ENCODE measurements at regions of chr2 and their contacts with region 1.

Region 1: GRCh38 chr2:2219984-2220383 is 111.1 kb downstream of the MYT1L start:
- DNase-seq: no peak
- H3K4me3 ChIP-seq: no peak overlapping the region
- H3K27ac ChIP-seq: no peak overlapping the region
- H3K4me1 ChIP-seq: no peaks in the 10 kb centered on the region
- H3K27me3 ChIP-seq: no peaks in the 10 kb centered on the region
- CTCF ChIP-seq: no peak
- POLR2A ChIP-seq: no peak

Region 2: GRCh38 chr2:2134042-2134441 is 85.9 kb before region 1 on chr2:
- intact Hi-C with region 1: no loop called
- DNase-seq: no peak
- H3K4me3 ChIP-seq: no peak overlapping the region
- H3K27ac ChIP-seq: no peak overlapping the region
- H3K4me1 ChIP-seq: no peaks in the 10 kb centered on the region
- H3K27me3 ChIP-seq: no peaks in the 10 kb centered on the region
- CTCF ChIP-seq: no peak
- POLR2A ChIP-seq: no peak

Region 3: GRCh38 chr2:2328848-2329247 is 108.9 kb after region 1 on chr2:
- intact Hi-C with region 1: no loop called
- DNase-seq: no peak
- H3K4me3 ChIP-seq: no peak overlapping the region
- H3K27ac ChIP-seq: no peak overlapping the region
- H3K4me1 ChIP-seq: no peaks in the 10 kb centered on the region
- H3K27me3 ChIP-seq: no peaks in the 10 kb centered on the region
- CTCF ChIP-seq: no peak
- POLR2A ChIP-seq: no peak

Region 4: DNA sequence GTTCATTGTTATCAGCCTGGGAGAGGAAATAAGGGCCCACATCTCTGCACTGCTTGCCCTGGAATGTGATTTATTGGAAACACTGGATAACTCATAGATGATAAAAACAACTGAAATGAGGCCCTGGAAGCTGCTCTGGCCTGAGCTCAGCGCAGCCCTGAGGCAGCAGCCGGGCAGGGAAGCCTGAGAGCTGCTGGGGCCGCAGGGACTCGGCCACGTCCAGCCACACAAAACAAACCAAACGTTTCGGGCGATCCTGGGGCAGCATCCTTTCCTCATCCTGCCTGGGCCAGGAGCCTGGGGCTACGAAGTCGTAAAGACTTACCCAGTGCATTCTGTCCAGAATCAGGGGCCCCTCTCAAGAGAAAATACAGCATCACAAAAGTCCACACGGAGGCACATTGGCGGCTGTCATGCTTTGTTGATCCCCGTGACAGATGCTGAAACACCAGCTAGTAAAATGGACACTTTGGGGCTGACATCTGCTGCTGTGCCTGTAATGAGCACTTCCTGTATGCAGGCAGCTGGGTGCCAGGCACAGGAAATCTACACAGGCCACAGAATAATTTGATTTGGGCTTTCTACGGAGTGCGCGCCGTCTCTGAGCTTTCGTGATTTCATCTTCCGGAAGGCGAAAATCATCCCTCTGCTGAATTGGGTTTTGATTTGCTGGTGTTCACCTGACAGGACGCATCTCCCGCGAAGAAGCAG is 907.1 kb after region 1 on chr2:
- intact Hi-C with region 1: loop called (anchors 5 kb)
- DNase-seq: no peak
- H3K4me3 ChIP-seq: no peak overlapping the region
- H3K27ac ChIP-seq: no peak overlapping the region
- H3K4me1 ChIP-seq: no peaks in the 10 kb centered on the region
- H3K27me3 ChIP-seq: no peaks in the 10 kb centered on the region
- CTCF ChIP-seq: no peak
- POLR2A ChIP-seq: no peak